Activated B cell treated with CpG ODN at 0.5 μM for 24 hours (primary cell): ENCODE measurements at regions of chr19 and their contacts with region 1.

Region 1: GRCh38 chr19:16542045-16542909 is at the start of gene CHERP:
- DNase-seq: peak; percentile 93
- ATAC-seq: peak; percentile 82
- H3K4me3 Mint-ChIP-seq: peak within 1 kb of the TSS; percentile 86
- H3K27ac Mint-ChIP-seq: peak within 1 kb of the TSS; percentile 76
- H3K4me1 Mint-ChIP-seq: peaks cover 61% of the 10 kb centered on the region
- H3K27me3 Mint-ChIP-seq: no peaks in the 10 kb centered on the region
- CTCF ChIP-seq: no peak
- total RNA-seq, gene CHERP: 70.9 and 89.3 TPM in 2 replicates

Region 2: DNA sequence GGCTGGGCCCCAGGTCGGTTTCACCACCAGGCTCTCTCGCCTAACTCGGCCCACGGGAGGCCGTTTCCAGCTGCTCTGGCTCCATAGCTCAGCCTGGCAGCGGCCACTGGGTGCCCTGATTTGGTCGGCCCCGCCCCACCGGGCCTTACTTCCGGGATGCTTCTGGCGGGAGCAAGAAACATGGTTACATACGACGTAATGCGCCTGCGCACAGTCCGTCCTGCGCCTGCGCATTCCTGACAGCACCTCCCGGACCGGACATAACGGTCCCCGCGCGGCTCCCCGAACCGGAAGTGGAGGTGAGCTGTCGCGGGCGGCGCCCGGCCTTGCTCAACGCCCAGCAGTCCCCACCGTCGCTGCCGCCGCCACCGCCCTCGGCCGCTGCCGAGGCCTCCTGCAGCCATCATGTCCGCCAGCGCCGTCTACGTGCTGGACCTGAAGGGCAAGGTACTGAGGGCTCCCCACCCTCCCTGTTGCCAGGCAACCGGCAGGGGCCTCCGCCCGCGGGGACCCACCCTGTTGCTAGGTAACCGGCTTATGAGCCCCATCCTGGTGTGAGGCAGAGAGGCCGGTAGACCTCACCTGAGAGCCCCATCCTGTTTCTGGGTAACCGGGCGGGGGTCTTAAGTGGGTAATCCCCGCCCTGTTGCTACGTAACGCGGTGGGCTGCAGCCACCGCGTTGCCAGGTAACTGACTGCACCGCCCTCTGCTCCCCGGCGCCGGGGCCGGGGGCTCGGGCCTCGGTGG is 344.5 kb before region 1 on chr19 and contains the start of gene AP1M1:
- CTCF ChIA-PET with region 1: no interaction called
- POLR2A ChIA-PET with region 1: no interaction called
- intact Hi-C with region 1: loop called (anchors 2 kb)
- DNase-seq: peak; percentile 99
- ATAC-seq: peak; percentile 88
- H3K4me3 Mint-ChIP-seq: peak within 1 kb of the TSS; percentile 83
- H3K27ac Mint-ChIP-seq: peak within 1 kb of the TSS; percentile 97
- H3K4me1 Mint-ChIP-seq: peaks cover 39% of the 10 kb centered on the region
- H3K27me3 Mint-ChIP-seq: no peaks in the 10 kb centered on the region
- CTCF ChIP-seq: no peak
- total RNA-seq, gene AP1M1: 82.6 and 87.5 TPM in 2 replicates

Region 3: GRCh38 chr19:16572332-16573211 is 30.3 kb after region 1 on chr19 and contains the start of gene SLC35E1:
- CTCF ChIA-PET with region 1: no interaction called
- POLR2A ChIA-PET with region 1: interaction called, 6 read pairs
- intact Hi-C with region 1: loop called (anchors 1 kb)
- DNase-seq: peak; percentile 88
- ATAC-seq: peak; percentile 93
- H3K4me3 Mint-ChIP-seq: peak within 1 kb of the TSS; percentile 94
- H3K27ac Mint-ChIP-seq: peak within 1 kb of the TSS; percentile 92
- H3K4me1 Mint-ChIP-seq: peaks cover 49% of the 10 kb centered on the region
- H3K27me3 Mint-ChIP-seq: no peaks in the 10 kb centered on the region
- CTCF ChIP-seq: no peak
- total RNA-seq, gene SLC35E1: 41.6 and 51.7 TPM in 2 replicates